Posterior cingulate gyrus (tissue), 11 donors: ENCODE measurements at regions of chr2 and their contacts with region 1.

Region 1: DNA sequence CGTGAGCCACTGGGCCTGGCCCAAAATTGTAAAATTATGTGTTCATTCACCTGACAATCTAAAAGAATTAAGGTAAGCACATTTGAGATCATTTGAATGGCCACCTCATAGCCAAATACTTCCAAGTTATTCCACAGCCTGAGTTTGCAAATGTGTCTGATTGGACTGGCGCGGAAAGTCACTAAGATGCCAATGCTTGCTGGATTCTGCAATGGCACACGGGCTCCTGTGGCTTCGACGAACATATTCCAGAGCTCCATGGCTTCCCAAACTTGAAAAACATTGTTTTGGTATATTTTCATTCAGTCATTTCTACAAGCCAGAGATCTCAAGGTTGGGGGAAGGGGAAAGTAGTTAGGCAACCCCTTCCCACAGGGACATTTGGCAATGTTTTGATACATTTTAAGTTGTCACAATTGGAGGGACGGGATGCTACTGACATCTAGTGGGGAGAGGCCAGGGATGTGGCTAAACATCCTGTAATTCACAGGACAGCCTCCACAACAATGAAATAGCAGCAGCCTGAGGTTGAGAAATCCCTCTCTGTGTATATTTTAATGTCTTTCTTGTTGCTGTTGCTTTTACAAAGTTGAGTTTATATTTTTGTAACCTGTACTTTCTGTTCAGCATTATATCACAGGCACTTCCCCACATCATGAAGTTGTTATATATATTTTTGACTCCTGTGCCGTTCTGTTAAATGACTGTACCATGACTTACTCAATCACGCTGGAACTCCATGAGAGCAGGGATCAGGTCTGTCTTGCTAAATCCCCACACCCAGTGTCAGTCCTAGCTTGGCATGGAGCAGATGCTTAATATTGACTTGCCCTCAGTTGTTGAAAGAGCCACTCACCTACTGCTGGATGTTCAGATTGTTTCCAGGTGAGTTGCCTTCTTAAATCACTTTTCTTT is 56.9 kb downstream of the COL4A4 start:
- DNase-seq: peak in 6 of 10 donors; percentile 19 to 90 (median 49)

Region 2: DNA sequence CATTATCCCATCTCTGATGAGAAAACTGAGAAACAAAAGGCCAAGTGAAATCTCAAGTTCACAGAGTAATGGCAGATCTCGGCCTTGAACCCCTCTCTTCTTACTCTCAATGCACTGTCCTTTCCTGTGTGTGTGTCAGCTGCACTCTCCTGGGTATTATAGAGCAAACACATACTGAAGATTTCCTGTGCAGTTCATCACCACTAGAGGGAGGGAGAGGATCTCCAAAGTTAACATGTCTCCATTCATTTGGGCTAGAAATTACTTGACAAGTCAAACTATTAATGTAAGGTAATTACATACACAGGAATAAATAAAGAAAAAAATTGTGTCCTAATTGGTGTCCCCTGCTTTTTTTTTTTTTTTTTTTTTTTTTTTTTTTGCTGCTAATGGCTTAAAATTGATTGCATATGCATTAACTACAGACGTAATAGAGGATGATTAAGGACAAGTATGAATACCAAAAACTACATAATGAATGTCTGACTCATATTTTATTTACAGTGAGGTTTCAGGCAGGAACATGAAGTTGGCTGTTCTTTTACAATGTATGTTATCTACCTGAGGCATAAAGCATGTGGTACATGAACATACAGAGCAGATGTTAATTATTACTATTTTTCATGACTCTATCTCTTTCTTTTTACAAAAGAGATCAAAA is 1438.4 kb before region 1 on chr2:
- intact Hi-C with region 1: loop called (anchors 2 kb)
- DNase-seq: no peak

Region 3: GRCh38 chr2:225894240-225894980 is 1212.7 kb before region 1 on chr2:
- intact Hi-C with region 1: loop called (anchors 10 kb)
- DNase-seq: no peak

Region 4: GRCh38 chr2:226561962-226562361 is 545.1 kb before region 1 on chr2:
- intact Hi-C with region 1: no loop called
- DNase-seq: no peak

Region 5: DNA sequence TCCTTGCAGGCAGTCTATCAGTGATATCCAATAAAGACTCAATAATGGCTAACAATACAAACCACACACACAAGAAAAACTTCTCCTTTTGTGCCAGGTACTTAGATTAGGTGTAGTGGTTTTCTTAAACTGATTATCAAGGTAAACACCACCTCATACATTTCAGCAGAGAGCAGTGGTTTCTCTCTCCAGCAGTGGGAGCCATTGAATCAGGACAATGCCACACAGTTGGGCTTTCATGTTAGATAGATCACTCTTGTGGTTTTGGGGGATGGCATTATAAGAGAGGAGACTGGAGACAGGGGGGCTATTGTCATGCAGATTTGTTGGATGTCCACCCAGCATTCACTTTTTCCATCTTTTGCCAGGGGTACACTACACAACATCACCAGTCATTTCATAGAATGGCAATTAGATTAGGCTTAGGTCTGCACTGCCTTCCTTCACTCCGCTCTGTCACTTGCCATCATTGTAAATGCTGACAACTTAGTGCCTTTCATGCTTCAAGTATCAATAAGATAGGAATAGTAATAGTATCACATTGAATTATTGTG is 293.9 kb before region 1 on chr2:
- intact Hi-C with region 1: loop called (anchors 10 kb)
- DNase-seq: peak in 3 of 10 donors; percentile 26 to 54 (median 41)